Thyroid gland (tissue), 4 donors: ENCODE measurements at regions of chr10 and their contacts with region 1.

Region 1: GRCh38 chr10:71326464-71326881 is 7.4 kb downstream of the SLC29A3 start:
- DNase-seq: peak in 1 of 2 donors; percentile 53
- H3K4me3 ChIP-seq: no peak overlapping the region
- H3K27ac ChIP-seq: no peak overlapping the region
- H3K4me1 ChIP-seq: peaks cover 0 to 5% of the 10 kb centered on the region in 2 donors
- H3K27me3 ChIP-seq: no peaks in the 10 kb centered on the region
- CTCF ChIP-seq: no peak
- POLR2A ChIP-seq: no peak

Region 2: GRCh38 chr10:71368643-71369042 is 42.2 kb after region 1 on chr10:
- intact Hi-C with region 1: loop called (anchors 5 kb)
- DNase-seq: no peak
- H3K4me3 ChIP-seq: no peak overlapping the region
- H3K27ac ChIP-seq: no peak overlapping the region
- H3K4me1 ChIP-seq: peaks cover 0 to 12% of the 10 kb centered on the region in 2 donors
- H3K27me3 ChIP-seq: no peaks in the 10 kb centered on the region
- CTCF ChIP-seq: no peak
- POLR2A ChIP-seq: no peak